Activated CD8-positive, alpha-beta T cell treated with anti-CD3 and anti-CD28 coated beads for 36 hours (primary cell): ENCODE measurements at regions of chr17 and their contacts with region 1.

Region 1: GRCh38 chr17:40474419-40475002 is 26.9 kb downstream of the TNS4 start:
- DNase-seq: no peak
- ATAC-seq: no peak
- H3K4me3 Mint-ChIP-seq: no peak overlapping the region
- H3K27ac Mint-ChIP-seq: no peak overlapping the region
- H3K4me1 Mint-ChIP-seq: peaks cover 16% of the 10 kb centered on the region
- H3K27me3 Mint-ChIP-seq: no peaks in the 10 kb centered on the region
- CTCF ChIP-seq: no peak

Region 2: GRCh38 chr17:40264458-40265185 is 209.9 kb before region 1 on chr17:
- CTCF ChIA-PET with region 1: no interaction called
- POLR2A ChIA-PET with region 1: no interaction called
- intact Hi-C with region 1: no loop called
- DNase-seq: no peak
- ATAC-seq: no peak
- H3K4me3 Mint-ChIP-seq: no peak overlapping the region
- H3K27ac Mint-ChIP-seq: no peak overlapping the region
- H3K4me1 Mint-ChIP-seq: peaks cover 12% of the 10 kb centered on the region
- H3K27me3 Mint-ChIP-seq: no peaks in the 10 kb centered on the region
- CTCF ChIP-seq: no peak

Region 3: GRCh38 chr17:40410082-40410481 is 64.4 kb before region 1 on chr17:
- CTCF ChIA-PET with region 1: interaction called, 10 read pairs
- POLR2A ChIA-PET with region 1: interaction called, 3 read pairs
- intact Hi-C with region 1: no loop called
- DNase-seq: no peak
- ATAC-seq: no peak
- H3K4me3 Mint-ChIP-seq: no peak overlapping the region
- H3K27ac Mint-ChIP-seq: no peak overlapping the region
- H3K4me1 Mint-ChIP-seq: no peaks in the 10 kb centered on the region
- H3K27me3 Mint-ChIP-seq: no peaks in the 10 kb centered on the region
- CTCF ChIP-seq: no peak

Region 4: DNA sequence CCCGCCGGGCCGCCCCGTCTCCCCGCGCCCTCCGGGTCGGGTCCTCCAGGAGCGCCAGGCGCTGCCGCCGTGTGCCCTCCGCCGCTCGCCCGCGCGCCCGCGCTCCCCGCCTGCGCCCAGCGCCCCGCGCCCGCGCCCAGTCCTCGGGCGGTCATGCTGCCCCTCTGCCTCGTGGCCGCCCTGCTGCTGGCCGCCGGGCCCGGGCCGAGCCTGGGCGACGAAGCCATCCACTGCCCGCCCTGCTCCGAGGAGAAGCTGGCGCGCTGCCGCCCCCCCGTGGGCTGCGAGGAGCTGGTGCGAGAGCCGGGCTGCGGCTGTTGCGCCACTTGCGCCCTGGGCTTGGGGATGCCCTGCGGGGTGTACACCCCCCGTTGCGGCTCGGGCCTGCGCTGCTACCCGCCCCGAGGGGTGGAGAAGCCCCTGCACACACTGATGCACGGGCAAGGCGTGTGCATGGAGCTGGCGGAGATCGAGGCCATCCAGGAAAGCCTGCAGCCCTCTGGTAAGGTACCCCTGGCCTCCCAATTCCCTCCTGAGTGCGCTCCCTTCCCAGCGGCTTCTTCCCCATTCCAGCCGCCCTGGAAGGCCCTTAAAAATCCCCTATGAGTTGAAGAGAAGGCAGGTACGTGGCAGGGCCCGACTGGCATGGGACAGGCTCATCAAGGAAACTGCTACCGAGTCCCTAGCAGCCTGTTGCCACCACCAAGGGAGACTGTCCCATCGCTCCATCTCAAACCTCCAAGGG is 30.8 kb before region 1 on chr17:
- CTCF ChIA-PET with region 1: interaction called, 13 read pairs
- POLR2A ChIA-PET with region 1: no interaction called
- intact Hi-C with region 1: no loop called
- DNase-seq: peak; percentile 76
- ATAC-seq: peak; percentile 77
- H3K4me3 Mint-ChIP-seq: peak overlapping the region; percentile 62
- H3K27ac Mint-ChIP-seq: peak overlapping the region; percentile 83
- H3K4me1 Mint-ChIP-seq: peaks cover 28% of the 10 kb centered on the region
- H3K27me3 Mint-ChIP-seq: peaks cover 5% of the 10 kb centered on the region
- CTCF ChIP-seq: peak; percentile 70

Region 5: DNA sequence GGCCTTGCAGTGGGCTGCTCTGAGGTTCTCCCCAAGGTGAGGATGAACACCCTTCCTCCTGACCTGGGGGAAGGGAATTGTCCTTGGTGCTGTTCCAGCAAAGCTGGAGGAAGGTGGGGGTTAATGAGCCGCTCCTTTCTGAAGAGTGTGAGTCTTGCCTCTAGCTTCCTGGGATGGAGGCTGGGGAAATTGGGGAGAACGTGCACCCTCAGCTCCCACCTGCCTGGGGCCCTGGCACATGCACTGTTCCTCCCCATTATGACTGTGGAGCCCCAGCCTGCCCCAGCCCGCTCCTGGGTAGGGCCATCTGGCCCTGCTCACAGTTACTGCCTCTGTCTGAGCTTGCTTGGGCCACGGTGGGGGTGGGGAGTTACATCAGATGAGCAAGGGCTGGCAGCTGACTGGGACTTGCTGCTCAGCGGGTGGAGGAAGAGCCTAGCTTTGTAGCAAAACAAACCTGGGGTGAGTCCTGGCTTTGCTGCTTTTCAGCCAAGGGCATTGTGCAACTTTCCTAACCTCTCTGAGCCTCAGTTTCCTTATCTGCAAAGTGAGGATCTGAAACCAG is 15.9 kb after region 1 on chr17:
- CTCF ChIA-PET with region 1: interaction called, 20 read pairs
- POLR2A ChIA-PET with region 1: interaction called, 3 read pairs
- intact Hi-C with region 1: no loop called
- DNase-seq: peak; percentile 51
- ATAC-seq: peak; percentile 41
- H3K4me3 Mint-ChIP-seq: no peak overlapping the region
- H3K27ac Mint-ChIP-seq: peak overlapping the region; percentile 73
- H3K4me1 Mint-ChIP-seq: peaks cover 47% of the 10 kb centered on the region
- H3K27me3 Mint-ChIP-seq: no peaks in the 10 kb centered on the region
- CTCF ChIP-seq: no peak

Region 6: DNA sequence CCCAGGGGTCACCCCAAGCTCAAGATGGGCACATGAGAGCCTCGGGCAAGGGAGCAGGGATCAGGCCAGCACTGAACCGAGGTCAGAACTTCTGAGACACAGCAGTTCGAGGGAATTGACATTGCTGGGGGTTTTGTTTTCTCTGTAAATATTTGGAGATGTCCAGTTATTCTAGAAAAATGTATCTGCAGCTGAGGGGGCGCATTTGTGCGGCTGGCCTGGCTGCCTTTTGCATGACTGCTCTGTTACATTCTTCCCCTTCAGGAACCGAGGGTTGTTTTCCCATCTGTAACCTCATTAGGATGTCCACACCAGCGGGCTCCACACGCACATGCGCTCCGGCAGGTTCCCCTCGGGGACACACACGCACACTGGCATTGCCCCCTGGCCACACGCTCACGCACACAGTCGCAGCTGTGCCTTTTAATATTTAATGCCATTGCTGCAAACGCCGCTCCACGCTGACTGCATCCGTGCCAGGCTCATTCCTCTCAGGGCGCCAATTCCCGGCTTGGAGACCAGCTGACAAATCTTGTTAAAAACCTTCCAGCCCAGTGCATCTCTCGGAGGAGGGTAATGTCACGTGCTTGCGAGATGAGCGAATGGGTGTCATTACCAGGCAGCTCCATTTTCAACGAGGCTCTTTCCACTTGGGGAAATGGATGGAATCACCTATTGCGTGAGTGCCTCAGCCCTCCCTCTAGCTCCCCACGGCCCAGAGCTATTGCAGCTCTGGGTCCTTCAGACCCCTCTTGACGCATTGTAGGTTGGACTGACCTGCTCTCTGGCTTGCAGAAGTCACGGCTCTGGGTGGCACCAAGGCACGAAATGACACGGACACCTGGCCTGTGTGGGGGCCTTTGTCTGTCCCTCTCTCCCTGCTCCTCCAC is 77.6 kb after region 1 on chr17:
- CTCF ChIA-PET with region 1: interaction called, 10 read pairs
- POLR2A ChIA-PET with region 1: no interaction called
- intact Hi-C with region 1: no loop called
- DNase-seq: peak; percentile 58
- ATAC-seq: peak; percentile 12
- H3K4me3 Mint-ChIP-seq: peak overlapping the region; percentile 54
- H3K27ac Mint-ChIP-seq: peak overlapping the region; percentile 88
- H3K4me1 Mint-ChIP-seq: peaks cover 99% of the 10 kb centered on the region
- H3K27me3 Mint-ChIP-seq: no peaks in the 10 kb centered on the region
- CTCF ChIP-seq: no peak